Caco-2 (cell line): ENCODE measurements at regions of chr12 and their contacts with region 1.

Region 1: GRCh38 chr12:90854136-90854689 is 100.8 kb downstream of the CCER1 start:
- DNase-seq: peak; percentile 46 to 50
- H3K4me3 ChIP-seq: no peak overlapping the region
- H3K4me3 Mint-ChIP-seq: no peak overlapping the region
- H3K27ac Mint-ChIP-seq: no peak overlapping the region
- H3K4me1 ChIP-seq: no peaks in the 10 kb centered on the region
- H3K4me1 Mint-ChIP-seq: no peaks in the 10 kb centered on the region
- H3K27me3 ChIP-seq: no peaks in the 10 kb centered on the region
- H3K27me3 Mint-ChIP-seq: no peaks in the 10 kb centered on the region
- CTCF ChIP-seq: peak; percentile 68 to 84

Region 2: GRCh38 chr12:90695415-90695814 is 158.8 kb before region 1 on chr12:
- CTCF ChIA-PET with region 1: no interaction called
- POLR2A ChIA-PET with region 1: no interaction called
- intact Hi-C with region 1: loop called (anchors 5 kb)
- DNase-seq: no peak
- H3K4me3 ChIP-seq: no peak overlapping the region
- H3K4me3 Mint-ChIP-seq: no peak overlapping the region
- H3K27ac Mint-ChIP-seq: no peak overlapping the region
- H3K4me1 ChIP-seq: no peaks in the 10 kb centered on the region
- H3K4me1 Mint-ChIP-seq: no peaks in the 10 kb centered on the region
- H3K27me3 ChIP-seq: no peaks in the 10 kb centered on the region
- H3K27me3 Mint-ChIP-seq: no peaks in the 10 kb centered on the region
- CTCF ChIP-seq: no peak

Region 3: DNA sequence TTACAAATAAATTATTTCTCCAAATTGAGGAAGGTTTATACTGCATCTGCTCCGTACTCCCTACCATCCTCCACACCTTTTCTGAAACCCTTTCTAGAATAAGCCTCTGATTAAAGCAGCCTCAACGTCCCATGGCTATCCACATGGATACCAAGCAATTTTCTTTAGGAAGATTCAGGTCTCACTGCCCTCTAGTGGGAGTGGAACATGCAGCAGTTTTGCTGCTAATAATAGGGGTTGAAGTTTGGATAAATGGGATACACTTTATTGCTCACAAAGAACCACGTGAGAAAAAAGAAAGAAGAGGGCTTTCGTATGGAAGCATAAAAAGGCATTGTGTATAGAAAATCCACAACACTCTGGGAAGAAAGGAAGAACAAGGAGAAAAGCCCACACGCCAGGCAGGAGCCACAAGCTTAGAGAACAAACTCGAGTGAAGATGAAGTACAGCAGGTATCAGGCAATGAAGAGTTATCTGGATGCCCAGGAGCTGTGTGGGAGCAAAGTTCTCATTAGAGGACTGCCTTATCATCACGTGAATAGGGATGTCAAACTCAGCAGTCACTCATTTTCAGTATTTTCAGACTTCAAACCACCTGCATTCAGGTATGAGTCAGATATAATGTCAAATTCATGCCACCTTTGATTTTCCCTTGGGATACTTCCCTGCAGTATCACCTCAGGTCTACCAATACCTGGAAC is 55.0 kb after region 1 on chr12:
- CTCF ChIA-PET with region 1: no interaction called
- POLR2A ChIA-PET with region 1: no interaction called
- intact Hi-C with region 1: loop called (anchors 5 kb)
- DNase-seq: peak; percentile 34 to 42
- H3K4me3 ChIP-seq: no peak overlapping the region
- H3K4me3 Mint-ChIP-seq: no peak overlapping the region
- H3K27ac Mint-ChIP-seq: no peak overlapping the region
- H3K4me1 ChIP-seq: peaks cover 4% of the 10 kb centered on the region; the same call in 1 of the 2 replicates
- H3K4me1 Mint-ChIP-seq: no peaks in the 10 kb centered on the region
- H3K27me3 ChIP-seq: no peaks in the 10 kb centered on the region
- H3K27me3 Mint-ChIP-seq: no peaks in the 10 kb centered on the region
- CTCF ChIP-seq: peak; percentile 67 to 72

Region 4: GRCh38 chr12:91009319-91009950 is 155.2 kb after region 1 on chr12:
- CTCF ChIA-PET with region 1: no interaction called
- POLR2A ChIA-PET with region 1: no interaction called
- intact Hi-C with region 1: no loop called
- DNase-seq: no peak
- H3K4me3 ChIP-seq: no peak overlapping the region
- H3K4me3 Mint-ChIP-seq: no peak overlapping the region
- H3K27ac Mint-ChIP-seq: no peak overlapping the region
- H3K4me1 ChIP-seq: no peaks in the 10 kb centered on the region
- H3K4me1 Mint-ChIP-seq: no peaks in the 10 kb centered on the region
- H3K27me3 ChIP-seq: no peaks in the 10 kb centered on the region
- H3K27me3 Mint-ChIP-seq: no peaks in the 10 kb centered on the region
- CTCF ChIP-seq: no peak